Panc1 (cell line): ENCODE measurements at regions of chr7 and their contacts with region 1.

Region 1: GRCh38 chr7:114864278-114864677 is 57.6 kb upstream of the MDFIC start:
- DNase-seq: no peak
- ATAC-seq: no peak
- H3K4me3 ChIP-seq: no peak overlapping the region
- H3K27ac ChIP-seq: no peak overlapping the region
- H3K4me1 ChIP-seq: no peaks in the 10 kb centered on the region
- H3K27me3 ChIP-seq: no peaks in the 10 kb centered on the region
- CTCF ChIP-seq: no peak

Region 2: DNA sequence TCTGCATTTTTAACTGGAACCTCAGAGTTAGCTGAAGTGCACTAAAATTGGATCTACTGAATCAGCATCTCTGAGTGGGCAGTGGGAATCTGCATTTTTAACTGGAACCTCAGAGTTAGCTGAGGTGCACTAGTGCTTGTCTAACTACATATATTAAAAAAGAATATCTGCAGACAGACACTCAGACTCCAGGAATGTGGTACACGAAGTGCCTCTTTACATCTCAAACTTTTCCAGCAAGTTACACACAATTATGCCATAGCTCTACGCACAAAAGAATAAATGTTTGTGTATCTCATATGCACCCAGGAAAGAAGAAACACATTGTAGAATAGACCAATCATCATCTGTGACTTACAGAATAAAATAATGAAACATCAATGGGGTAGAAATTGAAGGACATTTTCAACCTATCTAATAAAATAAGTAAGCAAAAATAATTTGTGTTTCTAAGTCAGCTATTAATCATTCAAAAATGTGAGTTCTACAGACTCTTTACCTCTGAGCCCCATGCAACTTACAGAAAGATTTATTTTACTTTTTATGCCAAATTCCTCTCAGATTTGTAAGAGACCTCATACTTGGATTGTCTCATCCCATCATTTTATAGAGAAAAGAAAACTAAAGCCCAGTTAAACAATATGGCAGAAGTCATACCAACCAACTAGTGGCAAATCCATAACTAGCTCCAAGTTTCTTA is 973.8 kb before region 1 on chr7:
- CTCF ChIA-PET with region 1: interaction called, 15 read pairs
- POLR2A ChIA-PET with region 1: no interaction called
- in situ Hi-C with region 1: no loop called
- intact Hi-C with region 1: no loop called
- DNase-seq: no peak
- ATAC-seq: no peak
- H3K4me3 ChIP-seq: no peak overlapping the region
- H3K27ac ChIP-seq: no peak overlapping the region
- H3K4me1 ChIP-seq: no peaks in the 10 kb centered on the region
- H3K27me3 ChIP-seq: no peaks in the 10 kb centered on the region
- CTCF ChIP-seq: no peak

Region 3: GRCh38 chr7:114450431-114450830 is 413.8 kb before region 1 on chr7:
- CTCF ChIA-PET with region 1: no interaction called
- POLR2A ChIA-PET with region 1: no interaction called
- in situ Hi-C with region 1: no loop called
- intact Hi-C with region 1: no loop called
- DNase-seq: no peak
- ATAC-seq: no peak
- H3K4me3 ChIP-seq: no peak overlapping the region
- H3K27ac ChIP-seq: no peak overlapping the region
- H3K4me1 ChIP-seq: no peaks in the 10 kb centered on the region
- H3K27me3 ChIP-seq: no peaks in the 10 kb centered on the region
- CTCF ChIP-seq: no peak

Region 4: GRCh38 chr7:115276791-115277190 is 412.5 kb after region 1 on chr7:
- CTCF ChIA-PET with region 1: no interaction called
- POLR2A ChIA-PET with region 1: no interaction called
- in situ Hi-C with region 1: no loop called
- intact Hi-C with region 1: no loop called
- DNase-seq: no peak
- ATAC-seq: no peak
- H3K4me3 ChIP-seq: no peak overlapping the region
- H3K27ac ChIP-seq: no peak overlapping the region
- H3K4me1 ChIP-seq: no peaks in the 10 kb centered on the region
- H3K27me3 ChIP-seq: no peaks in the 10 kb centered on the region
- CTCF ChIP-seq: no peak